AG04449 (cell line): ENCODE measurements at regions of chr1 and their contacts with region 1.

Region 1: DNA sequence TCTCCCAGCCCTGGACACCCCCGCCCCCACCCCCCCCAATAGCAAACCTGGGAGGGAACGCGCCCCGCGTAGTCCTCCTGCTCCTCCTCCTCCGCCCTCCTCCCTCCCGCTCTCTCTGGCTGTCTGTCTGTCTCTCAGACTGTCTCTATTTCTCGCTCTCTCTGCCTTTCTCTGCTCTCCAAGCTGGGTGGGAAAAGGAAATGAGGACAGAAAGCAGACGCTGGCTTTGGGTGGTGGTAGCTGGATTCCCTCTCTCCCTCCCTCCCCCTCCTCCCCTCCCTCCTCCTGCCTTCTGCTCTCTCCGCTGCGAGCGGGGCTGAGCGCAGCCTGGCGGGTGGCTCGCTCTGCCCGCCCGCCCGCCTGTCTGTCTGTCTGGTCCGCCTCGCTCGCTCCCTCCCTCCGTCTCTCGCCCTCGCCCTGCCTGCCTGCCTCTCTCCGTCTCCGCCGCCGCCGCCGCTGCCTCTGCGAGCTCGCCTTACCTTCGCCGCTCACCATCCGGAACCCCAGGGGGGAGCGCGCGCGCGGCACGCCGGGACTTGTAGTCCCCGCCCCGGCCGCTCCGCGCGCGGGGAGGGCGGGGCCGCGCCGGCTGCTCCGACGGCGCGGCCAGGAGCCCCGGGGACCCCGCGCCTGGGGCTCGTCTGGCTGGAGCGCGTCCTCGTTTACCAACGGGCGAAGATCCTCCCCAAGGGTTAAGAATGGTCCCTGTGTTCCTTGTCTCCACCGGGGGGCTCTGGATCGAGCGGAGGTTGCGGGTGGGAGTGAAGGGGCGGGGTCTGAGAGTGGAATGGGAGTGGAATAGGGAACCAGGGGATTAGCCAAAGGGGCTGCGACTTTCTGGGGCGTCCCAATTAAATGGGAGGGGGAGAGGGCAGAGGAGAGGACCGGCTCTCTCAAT is at the start of gene AHDC1:
- DNase-seq: peak; percentile 33
- H3K4me3 ChIP-seq: peak within 1 kb of the TSS; percentile 87
- CTCF ChIP-seq: no peak

Region 2: DNA sequence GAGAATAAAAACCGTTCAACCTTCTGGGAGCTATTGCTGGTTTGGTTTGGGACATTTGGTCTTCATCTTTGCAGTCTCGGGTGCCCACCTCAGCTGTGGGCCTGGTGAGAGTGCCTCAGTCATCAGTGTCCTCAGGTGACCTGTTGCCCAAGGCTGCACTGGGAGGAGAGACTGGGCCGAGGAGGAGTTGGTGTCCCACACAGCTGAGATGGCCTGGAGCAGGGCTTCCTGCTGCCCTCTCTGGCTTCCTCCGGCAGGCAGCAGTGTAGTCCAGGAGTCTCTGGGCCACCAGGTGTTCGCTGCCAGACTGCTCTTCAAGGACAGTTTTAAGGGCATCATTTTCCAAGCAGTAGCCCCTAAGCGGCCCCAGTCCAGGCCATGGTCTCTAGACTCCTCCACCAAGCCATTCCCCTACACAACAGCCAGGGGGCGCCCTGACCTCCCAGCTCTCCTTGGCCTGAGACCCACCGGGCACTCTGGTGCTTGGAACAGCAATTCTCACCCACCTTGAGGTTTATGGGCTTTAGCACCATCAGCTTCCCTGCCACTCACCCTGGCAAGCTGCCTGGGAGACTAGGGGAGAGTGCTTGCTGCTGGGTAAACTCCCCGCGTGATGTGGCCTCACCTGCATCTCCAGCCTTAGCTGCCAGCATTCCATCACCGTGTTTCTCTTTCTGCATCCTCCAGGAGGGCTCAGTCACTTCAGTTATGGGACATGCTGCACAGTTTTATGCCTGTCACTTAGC is 271.2 kb before region 1 on chr1:
- CTCF ChIA-PET with region 1: interaction called, 25 read pairs
- POLR2A ChIA-PET with region 1: no interaction called
- DNase-seq: no peak
- H3K4me3 ChIP-seq: no peak overlapping the region
- CTCF ChIP-seq: peak; percentile 85

Region 3: DNA sequence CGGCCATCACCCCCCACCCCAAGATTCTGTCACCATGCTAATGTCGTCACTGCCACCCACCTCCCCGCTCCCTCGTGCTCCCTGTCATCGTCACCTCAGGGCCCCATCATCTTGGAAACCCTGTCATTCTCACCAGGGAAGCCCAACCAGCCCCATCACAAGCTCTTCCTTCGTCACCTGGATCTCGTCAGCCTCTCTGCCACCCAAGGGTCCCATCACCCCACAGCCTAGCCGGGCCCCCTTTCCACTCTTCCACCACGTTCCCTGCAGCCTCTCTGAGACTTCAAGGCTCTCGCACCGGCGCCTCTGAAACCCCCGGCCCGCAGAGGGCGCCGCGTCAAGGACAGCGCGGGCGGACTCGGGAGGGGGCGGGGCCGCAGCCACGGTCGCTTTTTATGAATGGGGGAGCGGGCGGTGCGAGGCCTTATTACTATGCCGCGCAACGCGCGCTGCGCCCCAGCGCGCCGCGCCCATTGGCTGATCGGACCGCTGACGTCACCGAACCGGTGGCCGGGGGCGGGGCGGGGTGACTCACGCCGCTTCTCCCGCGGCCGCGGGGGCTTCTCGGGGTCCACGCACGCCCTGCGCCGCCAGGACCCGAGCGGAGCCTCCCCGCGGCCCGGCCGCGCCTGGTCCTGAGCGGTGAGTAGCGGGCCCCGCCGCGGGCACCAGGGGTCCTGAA is 211.7 kb before region 1 on chr1 and contains the start of gene GPR3:
- CTCF ChIA-PET with region 1: interaction called, 260 read pairs
- POLR2A ChIA-PET with region 1: no interaction called
- DNase-seq: no peak
- H3K4me3 ChIP-seq: peak within 1 kb of the TSS; percentile 71
- CTCF ChIP-seq: peak; percentile 83

Region 4: GRCh38 chr1:27489910-27490741 is 113.8 kb before region 1 on chr1 and contains the start of gene WASF2:
- CTCF ChIA-PET with region 1: interaction called, 13 read pairs
- POLR2A ChIA-PET with region 1: interaction called, 3 read pairs
- DNase-seq: peak; percentile 83
- H3K4me3 ChIP-seq: peak within 1 kb of the TSS; percentile 72
- CTCF ChIP-seq: no peak

Region 5: DNA sequence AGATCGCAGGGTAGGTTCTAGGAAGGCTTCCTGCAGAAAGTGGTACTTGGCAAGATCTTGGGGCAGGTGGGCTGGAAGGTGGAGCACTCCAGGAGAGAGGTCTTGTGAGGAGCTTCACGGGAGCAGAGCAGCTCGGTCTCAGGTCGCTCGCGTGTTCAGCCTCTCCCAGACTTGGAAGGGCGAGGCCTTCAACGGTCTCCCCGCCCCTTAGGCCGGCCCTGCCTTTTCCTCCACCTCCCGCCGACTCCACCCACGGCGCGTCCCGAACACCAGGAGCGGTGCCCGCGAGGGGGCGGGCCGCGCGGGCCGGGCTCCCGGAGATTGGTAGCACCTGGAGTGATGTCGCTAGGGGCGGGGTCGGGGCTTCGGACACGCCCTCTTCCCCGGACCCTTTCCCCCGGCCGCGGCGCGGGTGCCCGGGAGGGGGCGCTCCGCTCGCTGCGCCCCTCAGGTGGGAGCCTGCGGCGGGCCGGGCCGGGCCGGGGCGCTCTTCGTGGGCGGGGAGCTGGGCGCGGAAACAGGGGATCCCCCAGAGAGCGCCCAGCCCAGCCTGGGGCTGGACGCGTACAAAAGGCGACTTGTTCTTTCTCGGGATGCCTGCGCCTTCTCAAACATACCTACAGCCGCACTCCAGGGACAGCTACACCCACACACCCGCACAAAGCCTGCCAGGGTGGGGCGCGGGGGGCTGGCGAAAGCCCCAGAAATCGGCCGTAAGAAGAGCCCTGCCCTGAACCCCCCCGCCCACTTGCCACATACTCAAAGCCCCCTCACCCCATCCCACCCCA is 35.4 kb before region 1 on chr1:
- CTCF ChIA-PET with region 1: interaction called, 689 read pairs
- POLR2A ChIA-PET with region 1: interaction called, 3 read pairs
- DNase-seq: peak; percentile 10
- H3K4me3 ChIP-seq: peak overlapping the region; percentile 27; the same call in 1 of the 2 replicates
- CTCF ChIP-seq: peak; percentile 43

Region 6: DNA sequence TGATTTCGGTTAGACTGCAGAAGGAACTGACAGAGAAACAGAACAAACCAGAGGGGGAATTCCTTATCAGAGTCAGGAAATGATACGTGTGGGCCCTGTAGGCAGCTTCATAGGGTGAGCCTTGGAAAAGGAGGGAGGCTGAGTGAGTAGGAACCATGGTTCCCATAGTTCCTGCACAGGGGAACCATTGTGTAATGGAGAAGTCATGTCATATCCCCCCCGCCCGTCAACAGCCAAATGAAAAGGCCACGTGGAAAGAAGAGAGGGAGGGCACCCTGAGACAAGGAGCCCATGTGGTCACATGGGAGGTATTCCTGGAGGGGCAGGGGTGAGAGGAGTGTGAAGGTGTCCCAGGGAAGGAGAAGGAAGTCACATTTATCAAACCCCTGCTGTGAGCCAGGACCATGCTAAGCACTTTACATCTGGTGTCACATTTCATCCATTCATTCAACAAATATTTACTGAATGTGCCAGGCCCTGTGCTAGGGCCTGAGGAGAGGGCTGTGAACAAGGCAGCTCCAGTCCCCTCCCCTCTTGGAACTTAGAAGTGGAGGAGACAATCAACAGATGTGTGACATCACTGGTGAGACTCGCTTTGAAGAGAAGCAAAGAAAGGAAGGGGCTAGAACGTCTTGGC is 46.7 kb after region 1 on chr1:
- CTCF ChIA-PET with region 1: interaction called, 22 read pairs
- POLR2A ChIA-PET with region 1: no interaction called
- DNase-seq: no peak
- H3K4me3 ChIP-seq: no peak overlapping the region
- CTCF ChIP-seq: no peak